Activated CD8-positive, alpha-beta T cell treated with anti-CD3 and anti-CD28 coated beads, Interleukin-2, amount 10 ng/mL, durations not matched to agents 7 days and 5 days (primary cell): ENCODE measurements at regions of chr10 and their contacts with region 1.

Region 1: GRCh38 chr10:21495752-21496342 is 29.6 kb downstream of the SKIDA1 start:
- DNase-seq: peak; percentile 87
- ATAC-seq: peak; percentile 83
- H3K4me3 Mint-ChIP-seq: peak overlapping the region; percentile 79
- H3K27ac Mint-ChIP-seq: no peak overlapping the region
- H3K4me1 Mint-ChIP-seq: peaks cover 22% of the 10 kb centered on the region
- H3K27me3 Mint-ChIP-seq: peaks cover 59% of the 10 kb centered on the region

Region 2: GRCh38 chr10:21517134-21518031 is 21.5 kb after region 1 on chr10:
- CTCF ChIA-PET with region 1: interaction called, 12 read pairs
- POLR2A ChIA-PET with region 1: interaction called, 3 read pairs
- DNase-seq: peak; percentile 33
- ATAC-seq: peak; percentile 62
- H3K4me3 Mint-ChIP-seq: peak overlapping the region; percentile 58
- H3K27ac Mint-ChIP-seq: no peak overlapping the region
- H3K4me1 Mint-ChIP-seq: peaks cover 38% of the 10 kb centered on the region
- H3K27me3 Mint-ChIP-seq: peaks cover 78% of the 10 kb centered on the region

Region 3: DNA sequence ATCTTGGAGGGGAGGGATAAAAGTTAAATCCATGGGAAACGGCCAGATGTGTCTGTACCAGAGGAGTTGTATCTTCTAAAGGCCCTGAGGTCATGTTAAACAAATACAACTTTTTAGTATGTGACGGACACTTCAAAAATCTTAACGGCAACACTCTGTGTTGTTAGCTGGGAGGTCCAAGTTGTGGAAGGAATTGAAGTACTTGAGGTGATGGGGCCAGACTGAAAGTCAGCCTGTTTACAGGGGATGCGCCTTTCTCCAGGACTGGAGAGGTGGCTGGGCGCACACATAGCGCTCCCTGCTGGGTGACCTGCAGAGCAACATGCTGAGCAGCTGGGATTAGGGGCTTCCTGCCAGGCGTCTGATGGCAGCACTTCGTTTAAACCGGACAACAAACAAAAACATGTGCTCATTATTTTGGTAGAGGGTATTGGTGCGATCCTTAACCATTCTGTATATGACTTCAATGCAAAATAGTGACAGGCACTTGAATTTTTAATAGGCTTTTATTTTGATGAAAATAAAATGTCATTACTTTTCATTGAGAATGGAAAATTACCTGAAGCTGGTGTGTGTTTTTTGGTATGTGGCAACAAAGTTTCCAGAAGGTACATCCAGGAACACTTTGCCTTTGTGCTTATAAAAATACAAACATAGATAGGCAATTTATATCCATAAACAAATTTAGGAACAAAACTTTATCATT is 236.4 kb after region 1 on chr10:
- CTCF ChIA-PET with region 1: interaction called, 48 read pairs
- POLR2A ChIA-PET with region 1: interaction called, 4 read pairs
- DNase-seq: peak; percentile 60
- ATAC-seq: peak; percentile 85
- H3K4me3 Mint-ChIP-seq: no peak overlapping the region
- H3K27ac Mint-ChIP-seq: no peak overlapping the region
- H3K4me1 Mint-ChIP-seq: peaks cover 35% of the 10 kb centered on the region
- H3K27me3 Mint-ChIP-seq: no peaks in the 10 kb centered on the region

Region 4: DNA sequence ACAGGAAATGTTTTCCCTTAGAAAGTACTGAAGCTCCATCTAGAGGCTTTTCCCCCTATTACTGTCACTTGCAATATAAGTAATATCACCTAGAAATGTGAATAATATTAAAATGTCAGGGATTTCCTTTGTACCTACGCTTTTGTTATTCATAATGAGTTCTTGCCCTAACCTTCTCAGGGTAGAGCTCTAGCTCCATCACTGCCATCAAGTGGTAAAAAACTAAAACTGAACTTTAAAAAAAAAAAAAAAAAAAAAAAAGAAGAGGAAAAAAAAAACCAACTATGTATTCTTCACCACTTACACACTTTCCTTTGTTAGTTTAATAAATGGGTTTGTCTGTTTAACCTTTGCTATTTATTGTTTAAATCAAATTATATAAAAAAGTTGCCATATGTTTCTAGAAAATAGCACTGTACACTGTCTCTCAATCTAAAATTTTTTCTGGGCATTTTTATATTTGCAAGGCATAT is 457.8 kb after region 1 on chr10:
- CTCF ChIA-PET with region 1: interaction called, 13 read pairs
- POLR2A ChIA-PET with region 1: no interaction called
- DNase-seq: no peak
- ATAC-seq: no peak
- H3K4me3 Mint-ChIP-seq: no peak overlapping the region
- H3K27ac Mint-ChIP-seq: no peak overlapping the region
- H3K4me1 Mint-ChIP-seq: no peaks in the 10 kb centered on the region
- H3K27me3 Mint-ChIP-seq: no peaks in the 10 kb centered on the region